Activated CD4-positive, alpha-beta T cell treated with anti-CD3 and anti-CD28 coated beads, Interleukin-2, amount 10 ng/mL, durations not matched to agents 24 days and 14 days (primary cell): ENCODE measurements at regions of chr10 and their contacts with region 1.

Region 1: DNA sequence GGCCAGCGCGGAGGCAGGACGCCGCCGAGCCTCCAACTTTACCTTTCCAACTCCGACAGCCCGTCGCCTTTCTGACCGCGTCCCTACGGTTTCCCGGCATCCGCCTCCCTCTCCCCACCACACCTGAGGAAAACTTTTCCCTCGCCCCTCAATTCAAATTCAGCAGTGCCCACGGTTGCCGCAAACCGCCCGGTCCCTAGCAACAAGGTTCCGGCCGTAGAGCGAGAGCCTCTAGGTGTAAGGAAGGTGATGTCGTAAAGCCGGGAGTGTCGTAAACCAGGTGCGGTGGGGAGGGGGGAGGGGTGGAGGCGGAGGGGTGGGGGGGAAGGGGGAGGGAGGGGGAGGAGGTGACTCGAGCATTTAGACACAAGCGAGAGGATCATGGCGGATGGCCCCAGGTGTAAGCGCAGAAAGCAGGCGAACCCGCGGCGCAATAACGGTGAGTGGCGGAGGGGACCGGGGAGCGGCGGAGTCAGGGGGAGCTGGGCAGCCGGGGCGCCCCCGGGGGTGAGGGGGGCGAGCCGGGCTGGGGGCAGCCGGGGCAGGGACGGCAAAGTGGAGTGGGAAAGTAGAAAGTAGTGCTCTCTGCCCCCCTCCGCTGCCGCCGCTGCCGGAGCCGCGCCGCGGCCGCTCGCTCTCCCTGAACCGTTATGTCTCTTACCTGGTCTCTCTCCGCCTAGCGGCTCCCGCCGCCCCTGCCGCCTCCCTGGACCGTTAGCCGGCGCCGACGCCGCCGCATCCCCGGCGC is at the start of gene ZEB1:
- DNase-seq: peak; percentile 96
- H3K4me3 Mint-ChIP-seq: peak within 1 kb of the TSS; percentile 99
- H3K27ac Mint-ChIP-seq: peak within 1 kb of the TSS; percentile 100
- H3K4me1 Mint-ChIP-seq: peaks cover 42% of the 10 kb centered on the region
- H3K27me3 Mint-ChIP-seq: no peaks in the 10 kb centered on the region
- total RNA-seq, gene ZEB1: 71.9 and 79.0 TPM in 2 replicates

Region 2: GRCh38 chr10:31031558-31032257 is 287.3 kb before region 1 on chr10 and contains the start of gene ZNF438:
- intact Hi-C with region 1: loop called (anchors 1 kb)
- DNase-seq: peak; percentile 98
- H3K4me3 Mint-ChIP-seq: peak within 1 kb of the TSS; percentile 89
- H3K27ac Mint-ChIP-seq: peak within 1 kb of the TSS; percentile 98
- H3K4me1 Mint-ChIP-seq: peaks cover 9% of the 10 kb centered on the region
- H3K27me3 Mint-ChIP-seq: no peaks in the 10 kb centered on the region
- total RNA-seq, gene ZNF438: 2.4 and 3.2 TPM in 2 replicates

Region 3: DNA sequence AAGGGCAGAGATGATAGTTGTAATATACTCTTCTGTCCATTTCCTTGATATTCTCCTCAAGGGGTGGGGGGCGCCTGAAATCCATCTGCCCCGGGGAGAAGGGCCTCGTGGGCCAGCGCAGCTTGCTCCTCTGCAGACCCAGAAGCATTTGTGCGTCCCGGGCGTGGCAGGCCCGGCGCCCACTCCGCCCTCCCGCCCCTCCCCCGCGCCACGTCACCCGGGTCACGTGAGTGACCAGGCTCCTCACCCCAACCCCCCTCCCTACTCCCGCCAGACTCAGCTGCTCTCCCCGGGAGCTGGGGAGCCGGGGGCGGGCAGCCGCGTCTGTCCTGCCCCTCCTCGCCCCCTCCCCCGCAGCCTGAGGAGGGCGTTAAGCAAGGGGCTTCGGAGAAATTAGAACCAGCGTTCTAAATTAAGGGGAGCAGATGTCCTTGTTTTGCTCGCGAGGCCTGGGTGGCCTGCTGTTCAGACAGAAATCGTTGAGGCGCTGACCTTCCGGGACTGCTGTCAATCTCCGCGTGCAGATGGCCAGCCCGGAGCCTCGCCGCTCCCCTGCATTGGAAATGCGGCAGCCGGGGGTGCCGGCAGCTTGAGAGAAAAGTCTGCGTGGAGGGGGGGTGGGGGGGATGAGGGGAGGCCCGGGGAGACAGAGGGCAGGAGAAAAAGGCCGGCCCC is 185.3 kb before region 1 on chr10:
- intact Hi-C with region 1: loop called (anchors 1 kb)
- DNase-seq: peak; percentile 85
- H3K4me3 Mint-ChIP-seq: peak overlapping the region; percentile 87
- H3K27ac Mint-ChIP-seq: peak overlapping the region; percentile 98
- H3K4me1 Mint-ChIP-seq: peaks cover 43% of the 10 kb centered on the region
- H3K27me3 Mint-ChIP-seq: no peaks in the 10 kb centered on the region

Region 4: DNA sequence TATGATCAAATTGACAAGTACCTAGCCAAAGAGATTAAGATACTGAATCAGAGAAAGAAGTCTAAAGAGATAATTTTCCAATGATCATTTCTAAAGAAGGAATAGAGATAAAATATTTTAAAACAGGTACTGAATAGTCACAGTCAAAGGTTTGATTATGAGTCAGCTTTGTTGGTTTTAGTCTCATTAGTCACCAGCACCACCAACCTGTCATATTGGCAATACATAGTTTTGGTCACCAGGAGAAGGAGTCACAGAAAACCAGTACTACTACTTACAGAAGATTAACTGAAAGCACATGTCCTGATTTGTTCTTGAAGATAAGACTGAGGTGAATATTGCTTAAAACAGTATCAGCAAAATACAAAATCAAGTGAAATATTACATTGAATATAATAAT is 34.5 kb after region 1 on chr10:
- intact Hi-C with region 1: loop called (anchors 1 kb)
- DNase-seq: peak; percentile 67
- H3K4me3 Mint-ChIP-seq: peak overlapping the region; percentile 25
- H3K27ac Mint-ChIP-seq: peak overlapping the region; percentile 80
- H3K4me1 Mint-ChIP-seq: peaks cover 39% of the 10 kb centered on the region
- H3K27me3 Mint-ChIP-seq: no peaks in the 10 kb centered on the region

Region 5: GRCh38 chr10:31759799-31760626 is 441.0 kb after region 1 on chr10:
- intact Hi-C with region 1: loop called (anchors 2 kb)
- DNase-seq: peak; percentile 98
- H3K4me3 Mint-ChIP-seq: peak overlapping the region; percentile 96
- H3K27ac Mint-ChIP-seq: peak overlapping the region; percentile 91
- H3K4me1 Mint-ChIP-seq: peaks cover 12% of the 10 kb centered on the region
- H3K27me3 Mint-ChIP-seq: no peaks in the 10 kb centered on the region